GM10248 (cell line): ENCODE measurements at regions of chr12 and their contacts with region 1.

Region 1: GRCh38 chr12:46811185-46811584 is 14.6 kb downstream of the SLC38A4 start:
- DNase-seq: no peak
- CTCF ChIP-seq: no peak

Region 2: DNA sequence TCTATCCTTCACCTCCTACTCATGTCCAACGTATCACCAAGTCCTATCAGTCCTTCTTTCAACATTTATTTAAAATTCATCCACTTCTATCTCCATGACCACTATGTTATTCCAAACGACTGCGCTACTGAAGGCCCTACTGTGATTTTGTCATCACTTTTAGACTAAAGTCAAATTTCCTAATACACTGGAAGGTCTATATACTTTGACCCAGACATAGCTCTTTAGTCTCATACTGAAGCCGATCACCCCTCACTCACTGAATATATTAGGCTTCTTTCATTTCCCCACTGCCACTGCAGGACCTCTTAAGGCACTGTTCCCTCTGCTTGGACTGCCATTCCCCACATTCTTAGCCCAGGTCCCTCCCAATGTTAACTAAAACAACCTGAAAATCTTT is 11.0 kb before region 1 on chr12:
- CTCF ChIA-PET with region 1: interaction called, 10 read pairs
- POLR2A ChIA-PET with region 1: no interaction called
- DNase-seq: no peak
- CTCF ChIP-seq: no peak

Region 3: GRCh38 chr12:46825591-46826414 is 14.6 kb after region 1 on chr12 and contains the start of gene SLC38A4:
- CTCF ChIA-PET with region 1: no interaction called
- POLR2A ChIA-PET with region 1: no interaction called
- DNase-seq: no peak
- CTCF ChIP-seq: no peak